Heart left ventricle (tissue), 16 donors: ENCODE measurements at regions of chr5 and their contacts with region 1.

Region 1: DNA sequence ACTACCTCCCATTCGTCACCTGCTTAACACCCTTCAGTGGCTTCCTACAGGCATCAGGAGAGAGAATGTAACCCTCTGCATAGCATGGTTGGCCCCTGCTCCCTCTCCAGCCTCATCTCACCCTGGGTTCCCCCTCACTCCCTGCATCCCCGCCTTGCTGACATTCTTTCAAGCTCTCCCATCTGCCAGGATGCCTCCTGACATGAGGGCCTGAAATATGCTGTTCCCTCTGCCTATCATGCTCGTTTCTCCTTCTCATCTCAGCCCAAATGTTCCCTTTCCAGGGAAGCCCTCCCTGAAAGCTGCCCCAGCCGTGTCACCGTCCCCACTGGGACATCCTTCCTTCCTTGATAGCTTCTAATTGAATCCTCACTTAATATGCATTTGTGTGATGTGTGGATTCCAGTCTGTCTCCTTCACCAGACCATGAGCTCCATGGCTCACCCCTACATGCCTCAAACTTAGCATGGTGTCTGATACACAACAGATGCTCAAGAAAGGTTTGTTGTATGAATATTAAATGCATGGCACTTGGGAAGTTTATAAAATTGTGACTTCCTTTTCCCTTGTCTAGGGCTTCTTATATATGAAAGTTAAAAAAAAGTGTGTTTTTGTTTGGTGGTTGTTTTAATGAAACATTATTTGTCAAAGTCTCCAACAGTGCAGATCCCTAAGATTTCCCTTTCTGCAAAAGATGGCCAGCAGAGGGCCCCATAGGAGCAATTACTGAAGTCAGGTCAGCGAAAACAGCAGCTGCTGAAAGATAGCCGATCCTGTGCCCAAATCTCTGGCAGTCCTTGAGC is 7.3 kb upstream of the C5orf58 start:
- DNase-seq: peak; percentile 70 to 82 (median 71)
- ATAC-seq: peak in 3 of 4 donors; percentile 73 to 82 (median 80)
- H3K4me3 ChIP-seq: no peak overlapping the region
- H3K27ac ChIP-seq: no peak overlapping the region
- H3K4me1 ChIP-seq: peaks cover 0 to 34% (median 0%) of the 10 kb centered on the region in 12 donors
- H3K27me3 ChIP-seq: no peaks in the 10 kb centered on the region
- CTCF ChIP-seq: peak; percentile 63 to 86 (median 78)
- POLR2A ChIP-seq: no peak

Region 2: DNA sequence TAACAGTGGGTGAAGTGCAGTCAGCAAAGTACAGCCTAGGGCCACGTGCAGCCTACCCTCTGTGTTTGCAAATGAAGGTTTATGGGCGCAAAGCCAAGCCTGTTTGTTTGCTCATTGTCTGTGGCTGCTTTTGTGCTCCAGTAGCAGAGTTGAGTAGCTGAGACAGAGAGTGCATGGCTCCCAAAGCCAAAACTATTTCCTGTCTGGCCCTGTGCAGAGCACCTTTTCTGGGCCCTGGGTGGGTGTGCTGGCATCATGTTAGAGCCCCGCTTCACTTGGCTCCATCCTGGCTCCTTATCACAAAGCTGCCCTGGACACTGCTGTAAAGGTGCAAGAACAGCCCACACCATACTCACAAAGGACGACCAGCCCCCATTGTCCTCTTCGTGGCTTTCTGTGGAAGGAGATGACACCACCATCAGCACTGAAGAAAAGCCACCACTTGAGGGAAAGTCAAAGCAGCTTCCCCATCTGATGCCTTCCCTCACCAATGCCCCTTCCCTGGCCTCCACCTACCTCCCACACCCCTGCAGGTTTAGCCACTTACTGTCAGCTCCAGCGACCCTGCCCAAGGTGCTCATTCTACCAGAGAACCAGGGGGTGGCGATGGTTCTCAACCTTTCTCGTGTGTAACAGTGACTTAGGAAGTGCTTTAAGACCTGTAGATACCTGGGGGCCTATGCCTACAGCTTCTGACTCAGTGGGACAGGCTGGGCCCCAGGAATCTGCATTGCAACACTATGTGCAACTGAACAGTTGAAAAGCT is 48.6 kb after region 1 on chr5:
- intact Hi-C with region 1: no loop called
- DNase-seq: peak in 1 of 5 donors; percentile 45
- ATAC-seq: peak in 1 of 4 donors; percentile 45
- H3K4me3 ChIP-seq: peak overlapping the region in 1 of 12 donors; percentile 3
- H3K27ac ChIP-seq: peak overlapping the region in 1 of 12 donors; percentile 94
- H3K4me1 ChIP-seq: peaks cover 0 to 96% (median 4%) of the 10 kb centered on the region in 12 donors
- H3K27me3 ChIP-seq: no peaks in the 10 kb centered on the region
- CTCF ChIP-seq: peak in 7 of 12 donors; percentile 7 to 58 (median 30)
- POLR2A ChIP-seq: no peak

Region 3: DNA sequence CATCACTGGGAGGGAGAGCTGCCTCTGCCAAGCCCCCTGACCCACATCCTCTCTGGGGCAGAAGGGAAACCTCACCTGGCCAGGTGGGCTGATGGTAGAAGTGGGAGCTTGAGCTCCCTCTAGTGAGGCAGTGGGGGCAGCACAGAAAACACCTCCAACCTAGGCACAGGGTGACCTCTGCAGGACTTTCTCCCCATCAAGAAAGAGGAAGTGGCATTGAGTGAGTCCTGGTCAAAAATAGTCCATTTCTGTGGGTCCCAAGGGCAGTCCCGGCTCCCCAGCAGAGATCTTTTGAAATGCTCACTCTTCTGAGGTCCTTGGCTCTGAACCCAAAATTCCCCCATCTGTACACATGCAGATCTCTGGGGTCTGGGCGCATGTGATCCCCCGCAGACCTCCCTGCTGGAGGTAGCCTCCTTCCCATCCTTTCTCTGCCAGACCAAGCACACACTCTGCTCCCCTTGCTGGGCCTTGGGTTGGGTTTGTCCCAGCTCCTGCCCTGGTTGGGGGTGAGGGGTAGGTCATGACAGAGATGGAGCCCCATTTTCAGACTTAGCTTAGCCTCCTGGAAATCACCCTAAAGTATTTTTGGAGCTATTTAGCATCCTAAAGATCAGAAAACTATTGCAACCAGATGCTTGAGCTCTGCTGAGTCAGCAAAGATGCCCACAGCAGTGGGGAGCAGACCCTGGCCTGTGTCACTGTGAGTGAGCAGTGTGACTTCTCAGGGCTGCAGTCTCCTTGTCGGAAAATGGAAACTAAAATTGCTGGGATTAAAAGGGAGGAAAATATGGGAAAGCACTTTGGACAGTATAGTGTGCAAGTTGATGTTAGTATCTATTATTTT is 113.6 kb after region 1 on chr5:
- intact Hi-C with region 1: loop called in 1 of 10 experiments (anchors 5 kb)
- DNase-seq: no peak
- ATAC-seq: peak in 3 of 4 donors; percentile 38 to 63 (median 62)
- H3K4me3 ChIP-seq: no peak overlapping the region
- H3K27ac ChIP-seq: no peak overlapping the region
- H3K4me1 ChIP-seq: peaks cover 0 to 50% (median 0%) of the 10 kb centered on the region in 12 donors
- H3K27me3 ChIP-seq: no peaks in the 10 kb centered on the region
- CTCF ChIP-seq: peak in 11 of 12 donors; percentile 25 to 58 (median 41)
- POLR2A ChIP-seq: no peak

Region 4: DNA sequence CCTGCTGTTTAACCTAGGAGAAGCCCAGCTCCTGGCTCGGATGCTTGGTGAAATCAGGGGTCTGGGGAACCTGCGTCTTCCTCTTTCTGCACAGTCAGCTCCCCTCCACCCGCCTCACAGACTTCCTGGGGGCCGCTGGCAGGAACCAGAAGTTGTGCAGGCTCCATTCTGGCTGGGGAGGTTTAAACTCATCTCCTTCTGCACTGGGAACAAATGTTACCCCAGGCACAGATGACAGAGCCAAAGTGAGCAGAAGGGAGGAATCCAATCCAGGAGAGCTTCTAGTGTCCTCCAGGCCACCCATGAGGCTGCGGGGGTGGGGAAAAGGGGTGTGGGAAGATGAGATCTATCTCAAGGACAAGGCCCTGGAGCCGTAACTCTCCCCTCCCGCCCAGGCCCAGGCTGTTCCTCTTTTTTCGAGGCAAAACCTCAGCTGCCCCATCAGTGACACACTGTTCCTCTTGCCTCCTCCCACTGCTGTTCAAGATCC is 132.5 kb after region 1 on chr5:
- intact Hi-C with region 1: loop called in 1 of 10 experiments (anchors 5 kb)
- DNase-seq: peak; percentile 59 to 83 (median 64)
- ATAC-seq: peak; percentile 30 to 65 (median 44)
- H3K4me3 ChIP-seq: no peak overlapping the region
- H3K27ac ChIP-seq: peak overlapping the region in 9 of 12 donors; percentile 6 to 83 (median 45)
- H3K4me1 ChIP-seq: peaks cover 0 to 83% (median 52%) of the 10 kb centered on the region in 12 donors
- H3K27me3 ChIP-seq: peaks cover 0 to 6% (median 0%) of the 10 kb centered on the region in 9 donors
- CTCF ChIP-seq: no peak
- POLR2A ChIP-seq: no peak

Region 5: GRCh38 chr5:170623576-170624181 is 398.2 kb after region 1 on chr5:
- intact Hi-C with region 1: loop called in 1 of 10 experiments (anchors 10 kb)
- DNase-seq: peak in 4 of 5 donors; percentile 39 to 50 (median 40)
- ATAC-seq: peak in 3 of 4 donors; percentile 46 to 55 (median 54)
- H3K4me3 ChIP-seq: no peak overlapping the region
- H3K27ac ChIP-seq: no peak overlapping the region
- H3K4me1 ChIP-seq: no peaks in the 10 kb centered on the region
- H3K27me3 ChIP-seq: peaks cover 0 to 4% (median 0%) of the 10 kb centered on the region in 9 donors
- CTCF ChIP-seq: peak; percentile 34 to 71 (median 57)
- POLR2A ChIP-seq: no peak

Region 6: GRCh38 chr5:170638454-170639220 is 413.1 kb after region 1 on chr5:
- intact Hi-C with region 1: loop called in 4 of 10 experiments (anchors 5 to 10 kb)
- DNase-seq: peak; percentile 52 to 81 (median 62)
- ATAC-seq: peak; percentile 18 to 82 (median 67)
- H3K4me3 ChIP-seq: no peak overlapping the region
- H3K27ac ChIP-seq: no peak overlapping the region
- H3K4me1 ChIP-seq: peaks cover 0 to 16% (median 11%) of the 10 kb centered on the region in 12 donors
- H3K27me3 ChIP-seq: peaks cover 0 to 3% (median 0%) of the 10 kb centered on the region in 9 donors
- CTCF ChIP-seq: peak; percentile 78 to 94 (median 88)
- POLR2A ChIP-seq: no peak